ENCODE measurements at regions of chr6 and their contacts with region 1.

Region 1: DNA sequence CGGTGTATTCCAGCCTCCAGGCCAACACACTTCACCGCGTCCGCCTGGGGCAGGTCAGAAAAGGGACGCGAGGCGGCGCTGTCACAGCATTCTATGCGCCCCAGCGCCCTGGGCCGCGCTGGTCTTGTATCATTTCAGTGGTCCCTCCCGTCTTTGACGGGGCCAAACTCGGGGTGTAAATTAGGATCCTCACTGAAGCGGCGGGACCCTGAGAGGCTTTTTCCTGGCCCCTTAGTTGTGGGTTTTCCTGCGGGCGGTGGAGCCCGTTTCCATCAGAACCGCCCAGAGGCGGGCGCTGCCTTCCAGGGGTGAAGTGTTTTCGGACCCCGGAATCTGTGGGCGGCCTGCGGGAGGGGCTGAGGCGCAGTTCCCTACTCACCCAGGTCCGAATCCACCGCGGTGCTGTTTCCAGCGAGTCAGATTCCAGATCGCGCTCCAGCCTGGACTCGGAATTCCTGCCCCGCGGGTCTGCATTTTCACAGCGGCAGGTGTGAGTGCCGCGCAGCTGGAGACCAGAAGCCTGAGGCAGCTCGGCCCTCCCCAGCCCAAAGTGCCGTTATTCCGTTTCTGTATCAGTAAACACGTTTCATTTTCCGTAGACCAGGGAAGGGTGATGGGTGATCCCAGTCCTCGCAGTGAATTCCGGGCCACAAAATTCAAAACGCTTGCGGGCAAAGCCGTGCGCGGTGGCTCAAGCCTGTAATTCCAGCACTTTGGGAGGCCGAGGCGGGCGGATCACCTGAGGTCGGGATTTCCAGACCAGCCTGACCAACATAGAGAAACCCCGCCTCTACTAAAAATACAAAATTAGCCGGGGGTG is 3.9 kb upstream of the MICB start:
- DNase-seq: peak; percentile 90 to 95
- ATAC-seq: peak; percentile 88
- H3K4me3 ChIP-seq: peak overlapping the region; percentile 53 to 57
- H3K27ac ChIP-seq: peak overlapping the region in 1 of 2 donors; percentile 28
- H3K4me1 ChIP-seq: peaks cover 0 to 1% of the 10 kb centered on the region in 2 donors
- H3K27me3 ChIP-seq: no peaks in the 10 kb centered on the region

Region 2: DNA sequence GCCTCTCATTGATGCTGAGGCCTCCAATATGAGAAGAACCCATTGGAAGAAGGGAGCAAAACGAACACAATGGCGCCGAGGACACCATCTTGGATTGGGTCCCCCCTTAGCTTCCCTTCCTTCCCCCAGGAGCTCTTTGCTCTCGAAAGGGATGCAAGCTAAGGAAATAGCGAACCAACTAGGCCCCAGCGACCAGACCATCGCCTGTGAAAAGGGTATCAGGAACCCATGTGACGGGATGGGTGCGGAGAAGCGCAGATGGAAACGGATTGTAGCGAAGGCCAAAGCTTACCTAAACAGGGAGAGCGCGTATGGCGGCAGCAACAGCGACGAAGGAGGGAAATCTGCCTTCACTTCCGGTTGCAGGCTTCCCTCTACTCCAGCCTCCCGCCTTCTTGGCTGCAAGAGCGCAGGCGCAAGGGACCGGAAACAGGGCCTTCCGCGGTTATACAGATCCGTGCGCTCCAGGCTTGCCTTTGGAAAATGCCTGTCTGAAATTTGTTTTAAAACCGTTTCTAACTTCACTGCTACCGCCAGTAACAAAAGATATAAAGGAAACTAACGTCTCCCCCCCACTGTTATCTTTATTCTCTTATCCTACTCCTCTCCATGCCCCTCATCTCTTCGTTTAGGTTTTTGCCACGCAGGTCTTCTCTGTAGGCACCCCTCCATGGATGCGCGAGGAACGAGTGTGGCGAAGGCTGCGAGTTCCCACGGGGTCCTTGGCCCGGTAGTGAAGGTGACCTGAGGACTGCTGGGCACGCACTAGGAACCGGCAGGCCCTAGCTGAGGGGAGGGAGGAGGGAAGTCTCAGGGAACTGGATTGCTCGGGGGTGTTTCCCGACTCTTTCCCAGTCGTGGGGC is 47.8 kb after region 1 on chr6 and contains the start of gene DDX39B:
- intact Hi-C with region 1: loop called in 1 of 2 experiments (anchors 5 kb)
- DNase-seq: peak; percentile 97
- ATAC-seq: peak; percentile 97
- H3K4me3 ChIP-seq: peak within 1 kb of the TSS; percentile 77 to 78
- H3K27ac ChIP-seq: peak within 1 kb of the TSS; percentile 47 to 94
- H3K4me1 ChIP-seq: peaks cover 3% of the 10 kb centered on the region in 2 donors
- H3K27me3 ChIP-seq: no peaks in the 10 kb centered on the region
- total RNA-seq, gene DDX39B: 235 to 270 TPM